Cardiac septum (tissue), 1 donor: ENCODE measurements at regions of chr11 and their contacts with region 1.

Region 1: DNA sequence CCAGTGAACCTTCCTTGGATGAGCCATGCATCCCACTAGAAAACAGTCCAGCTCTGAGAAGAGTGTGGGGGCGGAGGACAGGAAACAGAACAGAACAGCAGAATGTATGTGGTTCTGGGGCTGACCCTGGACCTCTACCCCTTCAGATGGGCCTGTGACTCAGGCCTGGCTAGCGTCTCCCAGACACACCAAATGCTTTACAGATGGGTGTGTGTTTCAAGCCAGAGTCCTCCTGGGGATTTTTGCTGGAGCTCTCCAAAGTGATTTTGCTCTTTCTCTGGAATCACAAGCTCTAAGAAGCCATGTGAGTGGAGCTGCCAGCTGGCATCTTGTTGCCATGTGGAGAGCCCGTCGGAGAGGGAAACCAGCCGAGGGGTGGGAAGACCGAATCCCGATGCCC is 13.2 kb upstream of the C1QTNF4 start:
- DNase-seq: no peak

Region 2: GRCh38 chr11:47499614-47500013 is 107.8 kb before region 1 on chr11:
- intact Hi-C with region 1: loop called (anchors 10 kb)
- DNase-seq: no peak